ENCODE measurements at regions of chr1 and their contacts with region 1.

Region 1: GRCh38 chr1:60108196-60108595 is 34.6 kb upstream of the C1orf87 start:
- DNase-seq: no peak
- H3K4me3 Mint-ChIP-seq: no peak overlapping the region
- H3K27ac Mint-ChIP-seq: no peak overlapping the region
- H3K4me1 Mint-ChIP-seq: no peaks in the 10 kb centered on the region
- H3K27me3 Mint-ChIP-seq: peaks cover 33% of the 10 kb centered on the region
- CTCF ChIP-seq: no peak

Region 2: GRCh38 chr1:59892841-59893811 is 215.1 kb before region 1 on chr1:
- CTCF ChIA-PET with region 1: no interaction called
- POLR2A ChIA-PET with region 1: no interaction called
- intact Hi-C with region 1: no loop called
- DNase-seq: no peak
- H3K4me3 Mint-ChIP-seq: no peak overlapping the region
- H3K27ac Mint-ChIP-seq: no peak overlapping the region
- H3K4me1 Mint-ChIP-seq: no peaks in the 10 kb centered on the region
- H3K27me3 Mint-ChIP-seq: no peaks in the 10 kb centered on the region
- CTCF ChIP-seq: no peak

Region 3: GRCh38 chr1:59936358-59936821 is 171.8 kb before region 1 on chr1:
- CTCF ChIA-PET with region 1: no interaction called
- POLR2A ChIA-PET with region 1: no interaction called
- intact Hi-C with region 1: no loop called
- DNase-seq: no peak
- H3K4me3 Mint-ChIP-seq: no peak overlapping the region
- H3K27ac Mint-ChIP-seq: no peak overlapping the region
- H3K4me1 Mint-ChIP-seq: no peaks in the 10 kb centered on the region
- H3K27me3 Mint-ChIP-seq: peaks cover 76% of the 10 kb centered on the region
- CTCF ChIP-seq: no peak

Region 4: DNA sequence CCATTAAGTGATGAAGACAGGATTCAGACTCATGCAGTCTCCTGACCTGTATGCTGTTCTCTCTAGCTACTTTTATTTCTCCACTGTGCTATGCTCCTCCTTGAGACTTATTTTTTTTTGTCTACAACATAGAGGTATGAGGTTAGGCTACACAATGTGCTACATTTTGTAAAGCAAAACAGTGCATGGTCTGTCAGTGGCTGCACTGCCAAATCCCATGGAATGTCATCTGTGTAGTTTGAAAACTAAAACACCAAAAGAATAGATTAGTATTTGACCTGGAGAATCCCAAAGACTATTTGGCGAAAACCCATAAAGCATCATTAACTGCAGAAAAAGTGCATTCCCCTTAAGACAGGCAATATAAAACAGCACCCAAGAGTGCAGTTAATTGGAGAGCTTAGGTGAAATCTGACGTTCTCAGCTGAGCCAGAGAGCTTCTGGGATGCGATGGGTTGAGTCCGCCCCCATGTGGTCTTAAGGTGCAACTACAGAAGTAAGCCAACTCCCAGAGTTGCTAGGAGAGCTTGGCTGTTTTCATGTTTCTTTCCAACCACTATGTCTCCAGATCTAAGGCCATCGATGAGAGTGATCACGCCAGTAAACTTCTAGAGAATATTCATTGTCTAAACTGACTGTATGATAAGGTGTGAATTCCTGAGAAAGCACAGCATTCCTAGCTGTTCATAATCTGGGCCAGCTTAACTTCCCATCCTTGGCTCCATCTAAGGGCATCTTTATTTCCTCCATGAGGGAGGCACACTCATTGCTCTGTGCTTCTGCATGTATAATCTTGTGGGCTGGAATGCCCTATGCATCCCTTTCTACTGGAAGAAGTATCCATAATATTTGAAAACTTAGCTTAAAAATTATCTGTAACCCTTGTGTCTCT is 160.9 kb before region 1 on chr1:
- CTCF ChIA-PET with region 1: no interaction called
- POLR2A ChIA-PET with region 1: no interaction called
- intact Hi-C with region 1: no loop called
- DNase-seq: peak; percentile 76
- H3K4me3 Mint-ChIP-seq: no peak overlapping the region
- H3K27ac Mint-ChIP-seq: no peak overlapping the region
- H3K4me1 Mint-ChIP-seq: no peaks in the 10 kb centered on the region
- H3K27me3 Mint-ChIP-seq: peaks cover 14% of the 10 kb centered on the region
- CTCF ChIP-seq: peak; percentile 83

Region 5: DNA sequence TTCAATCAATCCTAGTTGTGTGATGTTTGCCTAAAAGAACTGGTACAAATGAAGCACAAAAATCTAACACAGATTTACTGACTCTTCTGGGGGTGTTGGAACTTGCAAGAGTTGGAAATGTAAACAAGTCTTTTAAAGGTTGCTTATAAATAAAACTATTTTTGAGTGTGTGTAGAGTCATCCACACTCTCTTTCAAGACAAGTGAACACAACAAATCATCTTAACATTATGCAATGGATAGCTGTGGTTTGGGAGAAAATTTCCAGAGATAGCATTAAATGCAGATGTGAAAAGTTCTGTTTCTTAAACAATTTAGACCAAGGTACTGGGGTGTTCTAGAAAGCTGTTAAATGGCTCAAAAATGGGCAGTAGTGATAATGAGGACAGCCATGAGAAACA is 63.3 kb before region 1 on chr1:
- CTCF ChIA-PET with region 1: no interaction called
- POLR2A ChIA-PET with region 1: no interaction called
- intact Hi-C with region 1: loop called (anchors 10 kb)
- DNase-seq: no peak
- H3K4me3 Mint-ChIP-seq: no peak overlapping the region
- H3K27ac Mint-ChIP-seq: no peak overlapping the region
- H3K4me1 Mint-ChIP-seq: no peaks in the 10 kb centered on the region
- H3K27me3 Mint-ChIP-seq: peaks cover 11% of the 10 kb centered on the region
- CTCF ChIP-seq: no peak

Measured in MCF 10A (cell line).